PC-9 (cell line): ENCODE measurements at regions of chr14 and their contacts with region 1.

Region 1: DNA sequence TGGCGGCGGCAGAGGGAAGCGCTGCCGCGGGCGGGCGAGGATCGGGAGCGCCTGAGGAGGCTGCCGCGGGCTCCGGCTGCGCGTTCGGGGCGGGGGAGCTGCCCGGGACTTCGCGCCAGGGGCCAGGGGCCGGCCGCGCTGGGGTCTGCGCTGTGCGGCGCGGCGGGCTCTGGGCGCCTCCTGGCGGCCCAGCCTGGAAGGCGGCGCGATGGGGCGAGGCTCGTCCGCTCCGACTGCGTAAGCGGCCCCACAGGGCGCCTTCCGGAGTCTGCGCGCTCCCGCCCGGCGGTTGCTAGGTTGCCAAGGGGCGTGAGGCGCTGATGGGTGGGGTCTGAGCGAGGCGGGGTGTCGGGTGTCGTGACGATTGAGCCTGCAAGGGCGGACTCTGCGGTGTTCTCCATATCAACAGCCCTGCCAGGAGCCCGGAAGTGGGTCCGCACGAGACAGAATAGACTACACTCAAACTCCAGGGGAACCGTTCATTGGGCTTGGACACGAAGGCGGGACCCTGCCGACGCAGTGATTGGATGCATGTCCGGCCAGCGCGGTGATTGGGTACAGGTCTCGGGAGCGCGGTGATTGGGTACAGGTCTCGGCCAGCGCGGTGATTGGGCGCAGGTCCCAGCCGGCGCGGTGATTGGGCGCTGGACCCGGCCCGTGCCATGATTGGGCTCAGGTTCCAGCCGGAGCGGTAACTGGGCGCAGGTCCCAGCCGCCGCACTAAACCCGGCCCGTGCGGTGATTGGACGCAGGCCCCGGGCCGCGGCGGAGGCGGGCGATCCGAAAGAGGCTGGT is at the start of gene TEDC1:
- DNase-seq: peak; percentile 97 to 99
- H3K4me3 ChIP-seq: peak within 1 kb of the TSS; percentile 94
- H3K27ac ChIP-seq: peak within 1 kb of the TSS; percentile 65
- H3K4me1 ChIP-seq: peaks cover 28% of the 10 kb centered on the region
- H3K27me3 ChIP-seq: no peaks in the 10 kb centered on the region
- CTCF ChIP-seq: peak; percentile 51; the same call in 1 of the 2 replicates
- total RNA-seq, gene TEDC1: 21.2 and 31.9 TPM in 2 replicates

Region 2: DNA sequence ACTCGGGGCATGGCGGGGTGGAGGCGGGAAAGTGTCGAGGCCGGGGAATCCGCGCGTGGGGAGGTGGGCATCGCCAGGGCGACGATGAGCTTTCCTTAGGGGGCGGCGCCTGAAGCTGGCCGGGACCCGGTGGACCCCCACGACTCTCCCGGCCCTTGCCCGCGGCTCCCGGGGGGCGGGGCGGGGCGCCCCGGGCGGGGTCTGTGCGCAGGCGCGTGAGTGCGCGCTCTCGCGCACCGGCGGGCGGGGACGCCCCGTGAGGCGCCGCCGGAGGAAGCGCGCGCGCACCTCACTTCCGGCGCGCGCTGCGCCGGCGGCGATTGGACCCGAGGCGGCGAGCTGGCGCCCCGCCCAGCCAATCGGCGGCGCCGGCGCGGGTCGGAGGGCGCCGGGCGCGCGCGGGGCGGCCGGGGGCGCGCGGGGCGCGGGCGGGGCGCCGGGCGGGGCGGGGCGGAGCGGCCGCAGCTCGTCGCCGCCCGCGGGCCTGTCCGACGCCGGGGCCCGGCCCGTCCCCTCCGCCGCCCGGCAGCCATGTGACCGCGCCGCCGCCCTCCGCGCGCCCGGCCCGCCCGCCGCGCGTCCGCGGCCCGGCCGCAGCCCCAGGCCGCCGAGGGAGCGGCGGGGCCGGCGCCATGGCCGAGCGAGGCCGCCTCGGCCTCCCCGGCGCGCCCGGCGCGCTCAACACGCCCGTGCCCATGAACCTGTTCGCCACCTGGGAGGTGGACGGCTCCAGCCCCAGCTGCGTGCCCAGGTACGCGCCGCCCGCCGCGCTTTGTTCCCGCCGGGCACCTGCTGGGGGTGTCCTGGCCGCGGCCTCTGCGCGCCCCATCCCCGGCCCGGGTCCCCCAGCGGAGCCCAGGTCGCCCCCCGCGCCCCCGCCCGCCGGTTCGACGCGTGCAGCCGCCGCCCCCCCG is 176.2 kb before region 1 on chr14 and contains the start of gene PACS2:
- CTCF ChIA-PET with region 1: interaction called, 3 read pairs
- POLR2A ChIA-PET with region 1: no interaction called
- intact Hi-C with region 1: loop called (anchors 2 kb)
- DNase-seq: peak; percentile 45 to 66
- H3K4me3 ChIP-seq: peak within 1 kb of the TSS; percentile 98
- H3K27ac ChIP-seq: no peak within 1 kb of the TSS
- H3K4me1 ChIP-seq: peaks cover 14% of the 10 kb centered on the region
- H3K27me3 ChIP-seq: no peaks in the 10 kb centered on the region
- CTCF ChIP-seq: no peak
- total RNA-seq, gene PACS2: 43.3 and 52.2 TPM in 2 replicates

Region 3: DNA sequence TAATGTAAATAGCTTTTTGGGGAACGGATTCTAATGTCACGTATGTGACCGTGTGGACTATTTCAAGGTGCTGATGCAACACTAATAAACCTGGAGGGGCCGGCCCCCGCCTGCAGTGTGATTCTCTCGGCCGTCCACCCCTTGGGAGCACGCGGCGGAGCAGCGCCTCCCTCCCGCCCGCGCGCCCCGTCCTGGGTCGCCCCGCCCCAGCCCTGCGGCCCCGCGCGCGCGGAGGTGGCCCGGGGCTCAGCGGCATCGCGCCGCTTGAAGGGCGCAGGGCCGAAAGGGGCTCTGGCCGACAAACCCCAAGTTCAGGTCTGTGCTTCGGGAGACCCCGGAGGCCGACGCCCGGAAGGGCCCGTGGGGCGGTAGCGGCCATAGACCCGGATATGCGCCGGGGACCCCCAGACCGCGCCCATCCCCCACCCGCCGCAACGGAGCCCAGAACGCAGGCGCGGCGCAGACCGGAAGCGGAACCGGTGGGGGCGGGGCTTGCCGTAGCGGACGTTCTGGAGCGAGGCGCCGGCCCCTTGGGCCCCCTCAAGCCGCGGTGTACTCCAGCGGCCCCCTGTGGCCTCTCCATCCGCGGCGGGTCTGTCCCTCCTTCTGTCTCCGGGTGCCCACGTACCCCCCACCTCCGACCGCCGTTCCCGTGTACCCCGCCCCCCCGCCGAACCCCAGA is 92.6 kb before region 1 on chr14 and contains the start of gene TEX22:
- CTCF ChIA-PET with region 1: interaction called, 10 read pairs
- POLR2A ChIA-PET with region 1: no interaction called
- intact Hi-C with region 1: no loop called
- DNase-seq: peak; percentile 48 to 71
- H3K4me3 ChIP-seq: peak within 1 kb of the TSS; percentile 79
- H3K27ac ChIP-seq: peak within 1 kb of the TSS; percentile 34
- H3K4me1 ChIP-seq: peaks cover 7% of the 10 kb centered on the region; the same call in 1 of the 2 replicates
- H3K27me3 ChIP-seq: no peaks in the 10 kb centered on the region
- CTCF ChIP-seq: no peak
- total RNA-seq, gene TEX22: 2.6 and 6.5 TPM in 2 replicates

Region 4: GRCh38 chr14:105419195-105420091 is 71.3 kb before region 1 on chr14 and contains the start of gene MTA1:
- CTCF ChIA-PET with region 1: no interaction called
- POLR2A ChIA-PET with region 1: no interaction called
- intact Hi-C with region 1: no loop called
- DNase-seq: peak in 1 of 2 experiments; percentile 29
- H3K4me3 ChIP-seq: peak within 1 kb of the TSS; percentile 94
- H3K27ac ChIP-seq: no peak within 1 kb of the TSS
- H3K4me1 ChIP-seq: peaks cover 18% of the 10 kb centered on the region; the same call in 1 of the 2 replicates
- H3K27me3 ChIP-seq: peaks cover 1% of the 10 kb centered on the region; the same call in 1 of the 2 replicates
- CTCF ChIP-seq: no peak
- total RNA-seq, gene MTA1: 124 and 147 TPM in 2 replicates

Region 5: DNA sequence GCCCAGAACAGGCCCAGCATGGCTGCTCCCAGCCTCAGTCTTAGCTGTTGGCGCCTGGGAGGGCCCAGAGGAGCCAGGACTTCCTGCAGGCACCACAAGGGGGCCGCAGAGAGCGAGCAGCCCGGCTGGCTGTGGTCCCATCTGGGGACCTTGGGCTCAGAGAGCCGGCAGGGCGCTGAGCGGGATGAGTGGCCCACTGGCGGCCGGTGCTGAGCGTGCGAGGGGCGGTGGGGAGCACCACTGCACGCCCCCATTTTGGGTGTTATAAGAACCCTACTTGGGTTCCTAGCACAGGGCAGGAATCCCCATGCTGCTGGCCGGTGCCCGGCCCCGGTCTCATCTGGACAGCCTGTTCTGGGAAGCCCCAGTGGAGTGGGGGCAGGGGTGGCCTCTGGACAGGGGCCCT is 42.1 kb before region 1 on chr14:
- CTCF ChIA-PET with region 1: no interaction called
- POLR2A ChIA-PET with region 1: no interaction called
- intact Hi-C with region 1: loop called (anchors 2 kb)
- DNase-seq: peak in 1 of 2 experiments; percentile 34
- H3K4me3 ChIP-seq: no peak overlapping the region
- H3K27ac ChIP-seq: no peak overlapping the region
- H3K4me1 ChIP-seq: no peaks in the 10 kb centered on the region
- H3K27me3 ChIP-seq: no peaks in the 10 kb centered on the region
- CTCF ChIP-seq: peak; percentile 74

Region 6: GRCh38 chr14:105473677-105474482 is 16.9 kb before region 1 on chr14:
- CTCF ChIA-PET with region 1: no interaction called
- POLR2A ChIA-PET with region 1: interaction called, 13 read pairs
- intact Hi-C with region 1: loop called (anchors 1 kb)
- DNase-seq: peak; percentile 86 to 90
- H3K4me3 ChIP-seq: peak overlapping the region; percentile 66
- H3K27ac ChIP-seq: no peak overlapping the region
- H3K4me1 ChIP-seq: peaks cover 22% of the 10 kb centered on the region
- H3K27me3 ChIP-seq: no peaks in the 10 kb centered on the region
- CTCF ChIP-seq: no peak